ENCODE measurements at regions of chr7 and their contacts with region 1.

Region 1: DNA sequence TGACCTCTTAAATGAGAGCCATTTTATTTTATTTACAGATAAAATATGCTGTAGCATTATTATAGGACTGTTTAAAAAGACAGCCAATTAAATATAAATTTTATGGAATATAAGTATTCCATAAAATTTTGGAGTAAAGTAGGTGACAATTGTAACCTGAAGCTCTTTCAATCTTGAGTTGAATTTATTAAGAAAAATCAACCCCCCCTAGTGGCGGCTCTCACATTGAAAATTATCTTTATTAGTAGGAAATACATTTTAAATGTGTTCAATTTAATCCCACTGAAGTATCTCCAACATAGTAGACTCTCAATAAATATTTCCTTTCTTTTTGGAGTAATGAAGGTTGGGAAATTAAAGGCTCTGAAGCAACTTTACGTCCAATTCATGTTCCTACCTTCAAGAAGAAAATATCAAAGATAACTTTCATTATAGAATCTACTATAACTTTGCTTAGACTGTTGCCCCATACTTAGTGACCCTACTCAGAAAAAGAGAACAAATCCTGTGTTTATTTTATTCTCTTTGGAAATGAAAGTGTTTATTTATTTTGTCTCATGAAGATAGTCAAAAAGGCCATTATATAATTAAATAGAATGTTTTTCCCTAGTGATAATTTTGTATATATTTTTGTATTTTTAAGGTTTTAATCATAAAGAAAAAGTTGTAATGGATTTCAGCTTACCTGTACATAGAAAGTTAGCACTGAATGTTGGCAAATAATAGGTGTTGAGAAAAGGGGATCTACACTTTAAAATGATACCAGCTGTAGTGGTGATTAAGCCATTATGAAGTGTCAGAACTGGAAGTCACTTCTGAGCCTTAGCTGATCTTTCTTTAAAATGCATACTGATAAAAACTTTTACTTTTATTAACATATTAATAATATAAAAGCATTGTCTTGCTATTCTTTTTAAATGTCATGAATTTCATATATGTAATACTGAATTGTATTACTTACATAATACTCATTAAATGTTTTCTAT is 3.3 kb downstream of the AHR start:
- DNase-seq: peak in 1 of 2 donors; percentile 68
- H3K4me3 ChIP-seq: no peak overlapping the region
- CTCF ChIP-seq: no peak
- POLR2A ChIP-seq: no peak

Region 2: GRCh38 chr7:16989811-16990413 is 311.9 kb before region 1 on chr7:
- intact Hi-C with region 1: loop called (anchors 5 kb)
- DNase-seq: peak; percentile 85 to 91
- H3K4me3 ChIP-seq: no peak overlapping the region
- CTCF ChIP-seq: no peak
- POLR2A ChIP-seq: no peak

Region 3: DNA sequence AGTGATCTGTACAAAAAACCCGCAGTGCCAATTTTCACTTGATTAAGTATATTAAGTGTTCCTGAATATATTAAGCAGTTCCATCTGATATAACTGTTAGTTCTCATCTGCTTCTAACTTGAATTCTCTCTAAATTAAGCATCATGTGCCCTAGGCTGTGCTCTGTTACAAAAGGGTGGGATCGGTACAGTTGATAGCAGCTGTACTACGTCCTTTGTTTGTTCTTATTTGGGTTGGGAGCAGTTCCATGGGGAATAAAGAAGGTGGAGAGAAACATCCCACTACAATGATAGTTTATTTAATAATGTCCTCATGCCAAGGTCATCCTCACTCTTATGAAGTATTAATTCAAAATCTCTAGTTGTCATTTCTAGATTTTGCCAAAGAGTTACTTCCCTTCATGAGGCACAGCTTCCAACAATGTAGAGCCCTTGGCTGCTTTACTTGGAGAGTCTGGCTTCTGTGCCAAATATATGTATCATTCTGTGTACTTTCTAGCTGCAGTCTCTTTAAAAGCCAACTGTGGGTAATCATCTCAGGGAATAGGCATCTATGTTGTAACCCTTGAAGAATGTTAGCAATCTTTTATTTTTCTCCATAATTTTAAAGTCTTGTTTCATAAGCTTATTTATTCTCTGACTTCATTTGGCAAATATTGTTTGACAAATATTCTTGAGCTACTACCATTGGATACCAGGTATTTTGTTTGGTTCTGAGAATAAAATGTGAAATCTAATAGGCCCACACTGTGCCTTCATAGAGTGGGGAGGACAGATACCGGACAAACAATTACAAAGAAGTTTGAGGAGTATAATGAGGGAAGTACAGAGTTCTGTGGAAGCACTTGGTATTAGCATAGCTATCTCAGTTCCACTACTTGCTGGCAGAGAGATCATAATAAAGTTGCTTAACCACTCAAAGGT is 25.8 kb before region 1 on chr7:
- intact Hi-C with region 1: no loop called
- DNase-seq: no peak
- H3K4me3 ChIP-seq: no peak overlapping the region
- CTCF ChIP-seq: no peak
- POLR2A ChIP-seq: no peak